Activated CD8-positive, alpha-beta T cell treated with anti-CD3 and anti-CD28 coated beads for 36 hours (primary cell): ENCODE measurements at regions of chr2 and their contacts with region 1.

Region 1: DNA sequence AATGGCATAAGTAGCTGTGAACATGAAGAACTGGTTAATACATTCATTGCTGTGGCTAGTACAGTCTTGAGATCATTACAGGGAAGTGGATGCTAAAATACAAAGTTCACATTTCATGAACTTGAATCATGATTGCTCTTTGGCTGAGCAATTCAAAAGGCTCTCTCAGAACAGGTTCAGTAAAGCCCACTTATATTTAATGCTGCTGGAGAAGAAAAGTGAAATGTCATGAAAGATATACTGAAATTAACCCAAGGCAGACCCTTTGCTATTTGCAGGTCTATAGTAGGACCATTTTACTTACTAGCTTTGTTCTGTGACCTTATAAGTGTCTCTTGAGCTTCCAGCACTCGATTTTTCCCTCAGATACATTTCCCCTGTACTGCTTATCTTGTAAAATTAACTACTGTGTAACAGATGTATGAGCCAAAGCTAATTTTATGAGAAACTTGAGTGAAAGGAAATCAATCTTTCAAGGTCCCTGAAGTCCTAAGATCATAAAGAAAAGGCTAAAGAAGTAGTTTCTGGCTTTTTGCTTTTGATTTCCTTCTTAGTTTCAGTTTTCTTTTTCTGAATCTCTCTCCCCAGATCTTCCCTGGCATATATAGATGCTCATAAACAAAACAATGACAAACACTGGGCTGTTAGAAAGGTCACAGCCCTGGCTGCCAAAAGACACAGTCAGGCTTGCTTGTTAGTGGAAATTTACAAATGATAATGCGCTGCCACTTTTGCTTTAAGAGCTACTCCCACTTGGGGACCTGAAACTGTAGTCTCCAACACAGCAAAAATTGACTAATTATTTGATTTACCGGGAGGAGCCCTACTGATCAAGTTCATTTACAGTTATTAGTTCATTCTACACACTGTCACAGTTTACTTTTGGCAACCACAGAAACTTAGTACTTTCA is 132.7 kb upstream of the XPO1 start:
- DNase-seq: peak; percentile 51
- ATAC-seq: peak; percentile 98
- H3K4me3 Mint-ChIP-seq: peak overlapping the region; percentile 64
- H3K27ac Mint-ChIP-seq: peak overlapping the region; percentile 87
- H3K4me1 Mint-ChIP-seq: peaks cover 18% of the 10 kb centered on the region
- H3K27me3 Mint-ChIP-seq: no peaks in the 10 kb centered on the region
- CTCF ChIP-seq: no peak

Region 2: GRCh38 chr2:61658841-61659780 is 11.7 kb before region 1 on chr2:
- CTCF ChIA-PET with region 1: interaction called, 11 read pairs
- POLR2A ChIA-PET with region 1: no interaction called
- intact Hi-C with region 1: no loop called
- DNase-seq: no peak
- ATAC-seq: peak; percentile 56
- H3K4me3 Mint-ChIP-seq: no peak overlapping the region
- H3K27ac Mint-ChIP-seq: no peak overlapping the region
- H3K4me1 Mint-ChIP-seq: peaks cover 8% of the 10 kb centered on the region
- H3K27me3 Mint-ChIP-seq: no peaks in the 10 kb centered on the region
- CTCF ChIP-seq: peak; percentile 54